ENCODE measurements at regions of chr3 and their contacts with region 1.

Region 1: DNA sequence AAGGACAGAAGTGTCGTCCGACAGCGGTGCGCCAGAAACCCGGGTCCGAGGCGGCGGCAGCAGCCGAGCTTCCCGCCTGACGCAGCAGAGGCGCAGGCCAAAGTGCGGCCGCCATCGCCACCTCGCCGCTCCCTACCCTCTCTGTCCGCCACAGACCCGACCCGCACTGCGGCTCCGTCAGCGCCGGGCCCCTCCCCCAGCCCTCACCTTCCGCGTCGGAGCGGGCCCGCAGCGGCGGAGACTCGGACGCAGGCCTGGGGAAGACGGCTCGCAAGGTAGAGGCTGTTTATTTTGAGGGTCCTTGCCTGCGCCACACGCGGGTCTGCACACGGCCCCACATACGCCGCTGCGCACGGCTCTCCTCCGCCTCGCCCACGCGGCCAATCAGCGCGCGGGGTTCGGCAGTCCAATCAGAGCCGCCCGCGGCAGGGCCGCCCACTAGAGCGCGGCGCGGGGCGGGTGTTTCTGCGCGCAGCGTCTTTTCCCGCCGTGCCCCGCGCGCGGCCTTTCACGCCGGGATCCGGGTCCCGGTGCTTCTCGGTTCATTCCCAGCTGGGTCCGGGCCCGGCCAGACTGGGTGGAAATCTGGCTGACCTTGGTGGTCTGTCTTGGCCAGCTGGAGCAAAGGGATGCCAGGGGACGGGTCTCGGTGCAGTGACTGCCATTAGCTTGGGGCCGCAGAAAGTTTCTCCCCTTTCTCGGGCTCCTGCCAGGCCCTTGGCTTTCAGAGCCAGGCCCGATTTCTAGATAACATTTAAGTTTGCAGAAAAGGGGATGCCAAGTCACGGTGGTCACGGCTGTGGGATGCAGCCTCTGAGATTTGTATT is at the start of gene CNBP:
- DNase-seq: peak; percentile 80 to 96 (median 92)
- ATAC-seq: peak; percentile 96
- H3K4me3 ChIP-seq: peak within 1 kb of the TSS; percentile 77 to 91
- H3K4me3 Mint-ChIP-seq: peak within 1 kb of the TSS; percentile 97
- H3K27ac ChIP-seq: peak within 1 kb of the TSS; percentile 93 to 99
- H3K27ac Mint-ChIP-seq: peak within 1 kb of the TSS; percentile 99
- H3K4me1 ChIP-seq: peaks cover 33% of the 10 kb centered on the region
- H3K4me1 Mint-ChIP-seq: peaks cover 40% of the 10 kb centered on the region
- H3K27me3 ChIP-seq: no peaks in the 10 kb centered on the region
- H3K27me3 Mint-ChIP-seq: no peaks in the 10 kb centered on the region
- CTCF ChIP-seq: no peak
- total RNA-seq, gene CNBP: 296 to 301 TPM

Region 2: DNA sequence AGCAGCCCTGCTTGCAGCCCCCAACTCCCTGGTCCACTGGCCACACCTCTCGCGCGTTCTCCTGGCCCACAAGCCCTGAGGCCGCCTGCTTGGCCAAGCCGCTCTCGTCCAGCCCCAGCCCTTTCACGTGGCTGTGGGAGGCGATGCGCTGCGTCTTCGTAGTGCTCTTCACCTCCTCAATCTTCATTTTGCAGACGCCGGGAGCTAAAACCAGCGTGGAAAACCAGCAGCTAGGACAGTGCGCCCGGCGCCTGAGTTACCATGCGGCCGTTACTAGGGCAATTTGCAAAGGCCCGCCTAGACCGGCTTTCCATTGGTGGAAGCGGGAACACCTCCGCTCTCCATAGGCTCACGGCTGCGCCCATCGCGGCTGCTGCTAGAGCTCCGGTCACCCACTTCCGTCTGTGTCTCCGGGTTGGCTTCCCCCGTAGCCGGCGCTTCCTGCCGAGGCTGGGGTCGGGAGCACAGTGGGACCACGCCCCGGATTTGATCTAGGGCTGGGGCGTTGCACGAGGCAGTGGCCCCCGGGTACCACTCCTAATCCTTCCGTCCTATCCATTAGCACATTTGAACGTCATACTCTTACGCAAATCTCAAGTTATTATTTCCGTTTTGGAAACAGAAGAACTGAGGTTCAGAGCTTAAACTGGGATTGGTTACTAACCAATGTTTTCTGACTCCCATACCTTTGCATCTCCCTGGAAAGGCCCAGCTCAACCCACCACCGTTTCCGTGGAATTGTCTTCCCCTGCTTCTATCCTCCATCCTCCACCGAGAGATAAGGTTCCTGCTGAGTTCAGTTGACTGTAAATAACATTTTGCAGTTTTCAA is 1060.0 kb before region 1 on chr3 and contains the start of gene RUVBL1:
- CTCF ChIA-PET with region 1: no interaction called
- POLR2A ChIA-PET with region 1: no interaction called
- intact Hi-C with region 1: loop called in 1 of 2 experiments (anchors 10 kb)
- DNase-seq: peak; percentile 92 to 99 (median 96)
- ATAC-seq: peak; percentile 92
- H3K4me3 ChIP-seq: peak within 1 kb of the TSS; percentile 82 to 90
- H3K4me3 Mint-ChIP-seq: peak within 1 kb of the TSS; percentile 98
- H3K27ac ChIP-seq: peak within 1 kb of the TSS; percentile 86 to 96
- H3K27ac Mint-ChIP-seq: peak within 1 kb of the TSS; percentile 98
- H3K4me1 ChIP-seq: peaks cover 19% of the 10 kb centered on the region
- H3K4me1 Mint-ChIP-seq: peaks cover 27% of the 10 kb centered on the region
- H3K27me3 ChIP-seq: no peaks in the 10 kb centered on the region
- H3K27me3 Mint-ChIP-seq: no peaks in the 10 kb centered on the region
- CTCF ChIP-seq: no peak
- total RNA-seq, gene RUVBL1: 5.1 to 5.6 TPM

Region 3: DNA sequence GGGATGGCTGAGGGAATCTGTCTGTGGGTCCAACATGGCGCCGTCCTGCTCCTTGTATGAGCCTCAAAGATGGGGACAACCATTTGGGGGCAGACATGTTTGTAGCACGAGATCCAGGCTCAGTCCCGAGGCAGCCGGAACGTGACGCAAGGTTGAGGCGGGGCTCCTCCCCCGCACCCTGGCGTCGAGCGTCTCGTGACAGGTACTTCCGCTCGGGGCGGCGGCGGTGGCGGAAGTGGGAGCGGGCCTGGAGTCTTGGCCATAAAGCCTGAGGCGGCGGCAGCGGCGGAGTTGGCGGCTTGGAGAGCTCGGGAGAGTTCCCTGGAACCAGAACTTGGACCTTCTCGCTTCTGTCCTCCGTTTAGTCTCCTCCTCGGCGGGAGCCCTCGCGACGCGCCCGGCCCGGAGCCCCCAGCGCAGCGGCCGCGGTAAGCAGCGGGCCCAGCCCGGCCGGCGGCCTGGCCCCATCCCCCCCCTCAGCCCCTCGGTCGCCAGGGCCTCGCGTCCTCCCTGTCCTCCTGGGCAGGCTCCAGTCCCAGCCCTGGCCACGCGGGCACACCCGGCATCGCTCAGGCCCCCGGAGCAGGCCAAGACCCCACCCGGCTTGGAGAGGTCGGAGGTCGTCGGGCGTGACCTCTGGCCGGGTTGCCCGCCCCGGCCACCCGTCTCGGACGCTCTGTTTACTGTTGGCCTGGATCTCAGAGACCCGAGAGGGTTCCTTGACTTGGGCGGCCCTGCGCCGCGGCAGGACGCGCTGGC is 457.7 kb before region 1 on chr3 and contains the start of gene RAB7A:
- CTCF ChIA-PET with region 1: no interaction called
- POLR2A ChIA-PET with region 1: no interaction called
- intact Hi-C with region 1: loop called in 1 of 2 experiments (anchors 5 kb)
- DNase-seq: peak; percentile 95 to 99 (median 97)
- ATAC-seq: peak; percentile 98
- H3K4me3 ChIP-seq: peak within 1 kb of the TSS; percentile 82 to 83
- H3K4me3 Mint-ChIP-seq: peak within 1 kb of the TSS; percentile 97
- H3K27ac ChIP-seq: peak within 1 kb of the TSS; percentile 92
- H3K27ac Mint-ChIP-seq: peak within 1 kb of the TSS; percentile 95
- H3K4me1 ChIP-seq: peaks cover 41% of the 10 kb centered on the region
- H3K4me1 Mint-ChIP-seq: peaks cover 53% of the 10 kb centered on the region
- H3K27me3 ChIP-seq: no peaks in the 10 kb centered on the region
- H3K27me3 Mint-ChIP-seq: no peaks in the 10 kb centered on the region
- CTCF ChIP-seq: no peak
- total RNA-seq, gene RAB7A: 130 to 134 TPM

Region 4: GRCh38 chr3:129026728-129027543 is 156.8 kb before region 1 on chr3:
- CTCF ChIA-PET with region 1: no interaction called
- POLR2A ChIA-PET with region 1: interaction called, 4 read pairs
- intact Hi-C with region 1: loop called (anchors 1 kb)
- DNase-seq: peak; percentile 85 to 98 (median 91)
- ATAC-seq: peak; percentile 98
- H3K4me3 ChIP-seq: peak overlapping the region; percentile 58 to 61
- H3K4me3 Mint-ChIP-seq: peak overlapping the region; percentile 85
- H3K27ac ChIP-seq: peak overlapping the region; percentile 75 to 80
- H3K27ac Mint-ChIP-seq: peak overlapping the region; percentile 99
- H3K4me1 ChIP-seq: peaks cover 22% of the 10 kb centered on the region
- H3K4me1 Mint-ChIP-seq: peaks cover 26% of the 10 kb centered on the region
- H3K27me3 ChIP-seq: no peaks in the 10 kb centered on the region
- H3K27me3 Mint-ChIP-seq: no peaks in the 10 kb centered on the region
- CTCF ChIP-seq: peak; percentile 84

Region 5: GRCh38 chr3:129160891-129161859 is 22.6 kb before region 1 on chr3 and contains the start of gene ISY1:
- CTCF ChIA-PET with region 1: interaction called, 7 read pairs
- POLR2A ChIA-PET with region 1: interaction called, 31 read pairs
- intact Hi-C with region 1: loop called (anchors 1 kb)
- DNase-seq: peak; percentile 71 to 97 (median 86)
- ATAC-seq: peak; percentile 80
- H3K4me3 ChIP-seq: peak within 1 kb of the TSS; percentile 84 to 94
- H3K4me3 Mint-ChIP-seq: peak within 1 kb of the TSS; percentile 95
- H3K27ac ChIP-seq: peak within 1 kb of the TSS; percentile 92 to 99
- H3K27ac Mint-ChIP-seq: peak within 1 kb of the TSS; percentile 96
- H3K4me1 ChIP-seq: peaks cover 18% of the 10 kb centered on the region
- H3K4me1 Mint-ChIP-seq: peaks cover 43% of the 10 kb centered on the region
- H3K27me3 ChIP-seq: no peaks in the 10 kb centered on the region
- H3K27me3 Mint-ChIP-seq: no peaks in the 10 kb centered on the region
- CTCF ChIP-seq: peak; percentile 70
- total RNA-seq, gene ISY1: 35.2 to 38.7 TPM

Region 6: GRCh38 chr3:129278439-129278970 is 94.7 kb after region 1 on chr3 and contains the start of gene HMCES:
- CTCF ChIA-PET with region 1: no interaction called
- POLR2A ChIA-PET with region 1: interaction called, 3 read pairs
- intact Hi-C with region 1: loop called (anchors 1 to 2 kb)
- DNase-seq: peak; percentile 88 to 98 (median 96)
- ATAC-seq: peak; percentile 94
- H3K4me3 ChIP-seq: peak within 1 kb of the TSS; percentile 59 to 92
- H3K4me3 Mint-ChIP-seq: peak within 1 kb of the TSS; percentile 95
- H3K27ac ChIP-seq: peak within 1 kb of the TSS; percentile 88 to 93
- H3K27ac Mint-ChIP-seq: peak within 1 kb of the TSS; percentile 97
- H3K4me1 ChIP-seq: peaks cover 39% of the 10 kb centered on the region
- H3K4me1 Mint-ChIP-seq: peaks cover 42% of the 10 kb centered on the region
- H3K27me3 ChIP-seq: no peaks in the 10 kb centered on the region
- H3K27me3 Mint-ChIP-seq: no peaks in the 10 kb centered on the region
- CTCF ChIP-seq: no peak
- total RNA-seq, gene HMCES: 69.5 to 78.7 TPM

Region 7: GRCh38 chr3:129289201-129289921 is 105.6 kb after region 1 on chr3:
- CTCF ChIA-PET with region 1: no interaction called
- POLR2A ChIA-PET with region 1: no interaction called
- intact Hi-C with region 1: no loop called
- DNase-seq: no peak
- ATAC-seq: no peak
- H3K4me3 ChIP-seq: no peak overlapping the region
- H3K4me3 Mint-ChIP-seq: no peak overlapping the region
- H3K27ac ChIP-seq: no peak overlapping the region
- H3K27ac Mint-ChIP-seq: peak overlapping the region; percentile 45
- H3K4me1 ChIP-seq: no peaks in the 10 kb centered on the region
- H3K4me1 Mint-ChIP-seq: peaks cover 21% of the 10 kb centered on the region
- H3K27me3 ChIP-seq: no peaks in the 10 kb centered on the region
- H3K27me3 Mint-ChIP-seq: no peaks in the 10 kb centered on the region
- CTCF ChIP-seq: no peak

Region 8: DNA sequence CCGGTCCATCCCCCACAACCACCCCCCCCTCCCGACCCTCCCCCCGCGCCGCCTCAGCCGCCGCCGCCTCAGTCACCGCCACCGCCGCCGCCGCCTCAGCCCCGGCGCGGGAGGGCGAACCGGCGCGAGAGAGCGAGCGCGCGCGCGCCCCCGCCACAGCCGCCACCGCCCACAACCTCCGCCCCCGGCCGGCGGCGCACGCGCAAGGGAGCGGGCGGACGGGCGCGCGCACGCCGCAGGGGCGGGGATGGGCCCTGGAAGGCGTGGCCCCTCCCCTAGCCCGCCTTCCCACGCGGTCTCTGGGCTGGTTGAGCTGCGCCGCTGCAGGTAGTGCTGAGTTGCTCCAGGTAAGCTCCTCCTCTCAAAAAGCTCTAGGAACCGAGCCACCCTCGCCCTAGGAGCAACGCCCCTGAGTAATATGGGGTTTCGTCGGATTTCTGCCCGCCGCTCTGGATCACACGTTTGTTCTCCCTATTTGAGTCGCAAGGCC is 709.8 kb after region 1 on chr3 and contains the start of gene TMCC1:
- CTCF ChIA-PET with region 1: no interaction called
- POLR2A ChIA-PET with region 1: no interaction called
- intact Hi-C with region 1: loop called in 1 of 2 experiments (anchors 10 kb)
- DNase-seq: peak; percentile 72 to 96 (median 90)
- ATAC-seq: peak; percentile 94
- H3K4me3 ChIP-seq: peak within 1 kb of the TSS; percentile 91 to 97
- H3K4me3 Mint-ChIP-seq: peak within 1 kb of the TSS; percentile 90
- H3K27ac ChIP-seq: peak within 1 kb of the TSS; percentile 91 to 93
- H3K27ac Mint-ChIP-seq: peak within 1 kb of the TSS; percentile 93
- H3K4me1 ChIP-seq: peaks cover 39% of the 10 kb centered on the region
- H3K4me1 Mint-ChIP-seq: peaks cover 43% of the 10 kb centered on the region
- H3K27me3 ChIP-seq: no peaks in the 10 kb centered on the region
- H3K27me3 Mint-ChIP-seq: no peaks in the 10 kb centered on the region
- CTCF ChIP-seq: no peak
- total RNA-seq, gene TMCC1: 30.0 to 33.1 TPM

Region 9: GRCh38 chr3:129934234-129935123 is 750.7 kb after region 1 on chr3:
- CTCF ChIA-PET with region 1: no interaction called
- POLR2A ChIA-PET with region 1: no interaction called
- intact Hi-C with region 1: no loop called
- DNase-seq: peak in 8 of 9 experiments; percentile 5 to 63 (median 40)
- ATAC-seq: peak; percentile 62
- H3K4me3 ChIP-seq: no peak overlapping the region
- H3K4me3 Mint-ChIP-seq: no peak overlapping the region
- H3K27ac ChIP-seq: no peak overlapping the region
- H3K27ac Mint-ChIP-seq: no peak overlapping the region
- H3K4me1 ChIP-seq: no peaks in the 10 kb centered on the region
- H3K4me1 Mint-ChIP-seq: peaks cover 8% of the 10 kb centered on the region
- H3K27me3 ChIP-seq: no peaks in the 10 kb centered on the region
- H3K27me3 Mint-ChIP-seq: peaks cover 3% of the 10 kb centered on the region
- CTCF ChIP-seq: peak; percentile 85